Activated CD4-positive, alpha-beta memory T cell treated with anti-CD3 and anti-CD28 coated beads for 36 hours (primary cell): ENCODE measurements at regions of chr5 and their contacts with region 1.

Region 1: GRCh38 chr5:134101686-134102439 is 12.6 kb upstream of the TCF7 start:
- DNase-seq: peak; percentile 83
- H3K4me3 Mint-ChIP-seq: peak overlapping the region; percentile 29
- H3K27ac Mint-ChIP-seq: no peak overlapping the region
- H3K4me1 Mint-ChIP-seq: peaks cover 82% of the 10 kb centered on the region
- H3K27me3 Mint-ChIP-seq: no peaks in the 10 kb centered on the region

Region 2: GRCh38 chr5:134070725-134071613 is 30.9 kb before region 1 on chr5:
- CTCF ChIA-PET with region 1: interaction called, 49 read pairs
- POLR2A ChIA-PET with region 1: interaction called, 16 read pairs
- intact Hi-C with region 1: loop called (anchors 1 kb)
- DNase-seq: peak; percentile 58
- H3K4me3 Mint-ChIP-seq: peak overlapping the region; percentile 77
- H3K27ac Mint-ChIP-seq: peak overlapping the region; percentile 92
- H3K4me1 Mint-ChIP-seq: peaks cover 63% of the 10 kb centered on the region
- H3K27me3 Mint-ChIP-seq: no peaks in the 10 kb centered on the region

Region 3: DNA sequence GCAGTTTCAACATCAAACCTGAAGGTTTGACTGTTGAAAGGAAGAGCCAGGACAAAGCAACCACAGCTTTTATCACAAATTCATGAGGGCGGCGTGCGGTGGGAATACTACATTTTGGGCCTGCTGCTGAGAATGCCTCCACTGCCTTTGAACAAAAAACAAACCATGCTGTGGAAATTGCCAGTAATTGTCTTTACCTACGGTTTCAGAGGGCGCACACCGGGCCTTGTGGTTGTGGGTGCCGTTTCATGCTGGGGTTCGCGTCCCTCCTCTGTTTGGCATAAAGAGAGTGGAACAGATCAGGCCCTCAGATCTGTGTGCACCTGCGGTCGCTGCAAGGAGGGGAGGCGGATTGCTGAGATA is 14.9 kb before region 1 on chr5:
- CTCF ChIA-PET with region 1: interaction called, 54 read pairs
- POLR2A ChIA-PET with region 1: interaction called, 8 read pairs
- intact Hi-C with region 1: loop called (anchors 1 kb)
- DNase-seq: peak; percentile 88
- H3K4me3 Mint-ChIP-seq: peak overlapping the region; percentile 10
- H3K27ac Mint-ChIP-seq: peak overlapping the region; percentile 80
- H3K4me1 Mint-ChIP-seq: peaks cover 75% of the 10 kb centered on the region
- H3K27me3 Mint-ChIP-seq: peaks cover 2% of the 10 kb centered on the region

Region 4: GRCh38 chr5:134119720-134120119 is 17.9 kb after region 1 on chr5:
- CTCF ChIA-PET with region 1: interaction called, 136 read pairs
- POLR2A ChIA-PET with region 1: interaction called, 23 read pairs
- intact Hi-C with region 1: no loop called
- DNase-seq: peak; percentile 54
- H3K4me3 Mint-ChIP-seq: peak overlapping the region; percentile 70
- H3K27ac Mint-ChIP-seq: peak overlapping the region; percentile 84
- H3K4me1 Mint-ChIP-seq: peaks cover 84% of the 10 kb centered on the region
- H3K27me3 Mint-ChIP-seq: no peaks in the 10 kb centered on the region

Region 5: GRCh38 chr5:134132372-134133034 is 30.6 kb after region 1 on chr5:
- CTCF ChIA-PET with region 1: interaction called, 63 read pairs
- POLR2A ChIA-PET with region 1: interaction called, 22 read pairs
- intact Hi-C with region 1: no loop called
- DNase-seq: peak; percentile 89
- H3K4me3 Mint-ChIP-seq: peak overlapping the region; percentile 51
- H3K27ac Mint-ChIP-seq: peak overlapping the region; percentile 90
- H3K4me1 Mint-ChIP-seq: peaks cover 97% of the 10 kb centered on the region
- H3K27me3 Mint-ChIP-seq: no peaks in the 10 kb centered on the region

Region 6: GRCh38 chr5:134145779-134146581 is 44.1 kb after region 1 on chr5:
- CTCF ChIA-PET with region 1: interaction called, 23 read pairs
- POLR2A ChIA-PET with region 1: no interaction called
- intact Hi-C with region 1: no loop called
- DNase-seq: peak; percentile 89
- H3K4me3 Mint-ChIP-seq: no peak overlapping the region
- H3K27ac Mint-ChIP-seq: peak overlapping the region; percentile 57
- H3K4me1 Mint-ChIP-seq: peaks cover 24% of the 10 kb centered on the region
- H3K27me3 Mint-ChIP-seq: no peaks in the 10 kb centered on the region

Region 7: DNA sequence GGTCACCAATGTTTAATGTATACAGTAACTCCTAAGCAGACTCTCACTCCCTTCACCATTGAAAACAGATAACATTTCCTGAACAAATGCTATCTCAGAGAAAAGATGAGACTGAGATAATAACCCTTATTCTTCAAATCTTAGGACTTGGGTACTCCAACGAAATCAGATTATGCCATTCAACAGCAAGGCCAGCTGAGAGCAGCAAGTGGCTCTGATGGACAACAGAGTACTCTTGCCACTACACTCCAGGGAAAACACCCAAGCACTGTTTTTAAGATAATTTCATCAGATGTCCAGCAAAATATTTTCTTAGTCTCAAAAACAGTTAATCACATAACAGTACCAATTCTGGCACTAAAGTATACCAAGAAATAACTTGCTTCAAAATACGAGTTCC is 113.9 kb after region 1 on chr5:
- CTCF ChIA-PET with region 1: no interaction called
- POLR2A ChIA-PET with region 1: no interaction called
- intact Hi-C with region 1: no loop called
- DNase-seq: no peak
- H3K4me3 Mint-ChIP-seq: no peak overlapping the region
- H3K27ac Mint-ChIP-seq: no peak overlapping the region
- H3K4me1 Mint-ChIP-seq: peaks cover 64% of the 10 kb centered on the region
- H3K27me3 Mint-ChIP-seq: no peaks in the 10 kb centered on the region